Activated CD8-positive, alpha-beta T cell treated with anti-CD3 and anti-CD28 coated beads, Interleukin-2, amount 10 ng/mL, durations not matched to agents 7 days and 5 days (primary cell): ENCODE measurements at regions of chr3 and their contacts with region 1.

Region 1: GRCh38 chr3:12948891-12949711 is 107.7 kb upstream of the RPL32 start:
- DNase-seq: peak; percentile 67
- ATAC-seq: peak; percentile 90
- H3K4me3 Mint-ChIP-seq: peak overlapping the region; percentile 31
- H3K27ac Mint-ChIP-seq: peak overlapping the region; percentile 60
- H3K4me1 Mint-ChIP-seq: peaks cover 40% of the 10 kb centered on the region
- H3K27me3 Mint-ChIP-seq: no peaks in the 10 kb centered on the region

Region 2: GRCh38 chr3:12901623-12902045 is 47.5 kb before region 1 on chr3:
- CTCF ChIA-PET with region 1: no interaction called
- POLR2A ChIA-PET with region 1: no interaction called
- DNase-seq: no peak
- ATAC-seq: no peak
- H3K4me3 Mint-ChIP-seq: no peak overlapping the region
- H3K27ac Mint-ChIP-seq: peak overlapping the region; percentile 4
- H3K4me1 Mint-ChIP-seq: peaks cover 14% of the 10 kb centered on the region
- H3K27me3 Mint-ChIP-seq: no peaks in the 10 kb centered on the region

Region 3: GRCh38 chr3:12967606-12968351 is 18.7 kb after region 1 on chr3:
- CTCF ChIA-PET with region 1: interaction called, 10 read pairs
- POLR2A ChIA-PET with region 1: no interaction called
- DNase-seq: peak; percentile 90
- ATAC-seq: peak; percentile 95
- H3K4me3 Mint-ChIP-seq: peak overlapping the region; percentile 62
- H3K27ac Mint-ChIP-seq: no peak overlapping the region
- H3K4me1 Mint-ChIP-seq: peaks cover 50% of the 10 kb centered on the region
- H3K27me3 Mint-ChIP-seq: peaks cover 4% of the 10 kb centered on the region